CD8-positive, alpha-beta T cell (primary cell): ENCODE measurements at regions of chr17 and their contacts with region 1.

Region 1: DNA sequence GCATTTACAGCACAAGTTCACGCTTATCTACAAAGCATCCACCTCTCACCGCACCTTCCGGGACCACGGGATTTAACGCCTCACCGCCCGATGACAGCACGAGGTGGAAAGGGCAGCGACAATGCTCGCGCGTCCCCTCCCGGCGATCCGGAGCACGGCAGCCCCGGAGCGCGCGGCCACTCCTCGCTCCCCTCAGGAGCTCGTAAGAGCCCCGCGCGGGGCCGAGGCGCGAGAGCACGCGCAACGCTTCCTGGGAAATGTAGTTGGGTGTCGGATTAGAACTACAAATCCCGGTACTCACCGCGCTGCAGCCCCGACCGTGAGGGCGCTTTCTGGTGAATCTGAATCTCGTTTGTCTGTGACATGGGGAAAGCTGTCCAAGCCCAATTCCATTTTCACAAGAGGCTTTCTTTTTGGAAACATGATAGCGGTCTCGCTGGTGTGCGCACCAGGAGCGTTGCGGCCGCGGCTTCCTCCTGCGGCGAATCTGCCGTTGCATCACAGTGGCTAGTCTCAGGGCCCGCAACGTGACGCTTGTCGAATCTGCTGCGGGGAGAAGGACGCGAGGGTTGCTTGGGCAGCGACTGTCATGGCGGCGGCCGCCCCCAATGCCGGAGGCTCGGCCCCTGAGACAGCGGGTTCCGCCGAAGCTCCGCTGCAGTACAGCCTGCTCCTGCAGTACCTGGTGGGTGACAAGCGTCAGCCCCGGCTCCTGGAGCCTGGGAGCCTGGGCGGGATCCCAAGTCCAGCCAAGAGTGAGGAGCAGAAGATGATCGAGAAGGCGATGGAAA is at the start of gene TIMM22:
- DNase-seq: peak; percentile 84 to 98 (median 92)
- ATAC-seq: peak; percentile 93
- H3K4me3 ChIP-seq: peak within 1 kb of the TSS; percentile 86 to 97
- H3K4me3 Mint-ChIP-seq: peak within 1 kb of the TSS; percentile 99
- H3K27ac ChIP-seq: peak within 1 kb of the TSS; percentile 70 to 90
- H3K27ac Mint-ChIP-seq: peak within 1 kb of the TSS; percentile 97
- H3K4me1 ChIP-seq: peaks cover 9% of the 10 kb centered on the region
- H3K4me1 Mint-ChIP-seq: peaks cover 24% of the 10 kb centered on the region
- H3K27me3 ChIP-seq: no peaks in the 10 kb centered on the region
- H3K27me3 Mint-ChIP-seq: no peaks in the 10 kb centered on the region
- CTCF ChIP-seq: peak; percentile 90
- total RNA-seq, gene TIMM22: 13.2 to 14.0 TPM

Region 2: DNA sequence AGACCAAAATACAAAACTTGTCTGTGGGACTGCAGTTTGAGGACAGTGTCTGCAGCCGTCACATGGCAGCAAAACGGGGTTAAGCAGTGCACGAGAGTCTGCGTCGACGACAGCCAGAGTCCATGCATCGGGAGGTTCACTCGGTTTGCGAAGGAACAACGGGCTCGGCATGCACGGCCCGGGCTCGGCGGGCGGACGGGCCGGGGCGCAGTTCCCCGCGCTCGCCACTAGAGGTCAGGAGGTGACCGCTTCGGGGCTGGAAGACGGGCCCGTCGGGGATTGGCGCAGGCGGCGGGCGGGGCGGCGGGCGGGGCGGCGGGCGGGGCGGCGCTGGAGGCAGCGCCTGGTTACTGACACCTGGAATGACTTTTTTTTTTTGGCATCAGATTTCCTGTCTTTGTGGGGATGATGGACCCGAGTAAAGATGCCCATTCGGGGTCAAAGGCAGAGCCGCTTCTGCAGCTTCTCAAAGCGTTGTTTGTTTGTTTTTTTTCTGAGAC is 852.9 kb before region 1 on chr17:
- CTCF ChIA-PET with region 1: no interaction called
- POLR2A ChIA-PET with region 1: no interaction called
- intact Hi-C with region 1: loop called (anchors 2 to 5 kb)
- DNase-seq: peak; percentile 69 to 92 (median 83)
- ATAC-seq: peak; percentile 99
- H3K4me3 ChIP-seq: no peak overlapping the region
- H3K4me3 Mint-ChIP-seq: no peak overlapping the region
- H3K27ac ChIP-seq: no peak overlapping the region
- H3K27ac Mint-ChIP-seq: no peak overlapping the region
- H3K4me1 ChIP-seq: peaks cover 3% of the 10 kb centered on the region
- H3K4me1 Mint-ChIP-seq: peaks cover 2% of the 10 kb centered on the region
- H3K27me3 ChIP-seq: no peaks in the 10 kb centered on the region
- H3K27me3 Mint-ChIP-seq: peaks cover 6% of the 10 kb centered on the region
- CTCF ChIP-seq: peak; percentile 94

Region 3: GRCh38 chr17:633641-634101 is 363.1 kb before region 1 on chr17:
- CTCF ChIA-PET with region 1: no interaction called
- POLR2A ChIA-PET with region 1: no interaction called
- intact Hi-C with region 1: no loop called
- DNase-seq: no peak
- ATAC-seq: no peak
- H3K4me3 ChIP-seq: no peak overlapping the region
- H3K4me3 Mint-ChIP-seq: no peak overlapping the region
- H3K27ac ChIP-seq: no peak overlapping the region
- H3K27ac Mint-ChIP-seq: no peak overlapping the region
- H3K4me1 ChIP-seq: no peaks in the 10 kb centered on the region
- H3K4me1 Mint-ChIP-seq: no peaks in the 10 kb centered on the region
- H3K27me3 ChIP-seq: no peaks in the 10 kb centered on the region
- H3K27me3 Mint-ChIP-seq: no peaks in the 10 kb centered on the region
- CTCF ChIP-seq: no peak

Region 4: DNA sequence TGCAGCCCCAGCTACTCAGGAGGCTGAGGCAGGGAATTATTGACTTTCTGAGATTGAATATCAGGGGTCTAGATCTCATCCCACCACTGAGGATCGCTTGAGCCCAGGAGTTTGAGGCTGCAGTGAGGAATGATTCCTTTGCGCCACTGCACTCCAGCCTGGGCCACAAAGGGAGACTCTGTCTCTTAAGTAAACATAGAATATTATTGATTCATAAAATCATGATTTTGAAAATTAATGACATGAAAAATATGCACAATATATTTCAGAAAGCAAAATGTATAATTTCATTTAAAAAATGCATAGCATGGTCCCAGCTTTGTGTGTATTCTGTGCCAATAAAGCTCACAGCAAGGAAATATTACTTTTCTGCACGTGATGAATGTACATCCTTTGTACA is 280.5 kb before region 1 on chr17:
- CTCF ChIA-PET with region 1: interaction called, 5 read pairs
- POLR2A ChIA-PET with region 1: interaction called, 3 read pairs
- intact Hi-C with region 1: loop called (anchors 1 to 5 kb)
- DNase-seq: no peak
- ATAC-seq: no peak
- H3K4me3 ChIP-seq: no peak overlapping the region
- H3K4me3 Mint-ChIP-seq: no peak overlapping the region
- H3K27ac ChIP-seq: no peak overlapping the region
- H3K27ac Mint-ChIP-seq: no peak overlapping the region
- H3K4me1 ChIP-seq: peaks cover 18% of the 10 kb centered on the region
- H3K4me1 Mint-ChIP-seq: peaks cover 31% of the 10 kb centered on the region
- H3K27me3 ChIP-seq: no peaks in the 10 kb centered on the region
- H3K27me3 Mint-ChIP-seq: no peaks in the 10 kb centered on the region
- CTCF ChIP-seq: no peak

Region 5: GRCh38 chr17:781805-782731 is 214.7 kb before region 1 on chr17 and contains the starts of genes GLOD4 and MRM3:
- CTCF ChIA-PET with region 1: interaction called, 9 read pairs
- POLR2A ChIA-PET with region 1: interaction called, 4 read pairs
- intact Hi-C with region 1: loop called (anchors 1 kb)
- DNase-seq: peak; percentile 91 to 99 (median 95)
- ATAC-seq: peak; percentile 94
- H3K4me3 ChIP-seq: peak within 1 kb of the TSS; percentile 92 to 100
- H3K4me3 Mint-ChIP-seq: peak within 1 kb of the TSS; percentile 97
- H3K27ac ChIP-seq: peak within 1 kb of the TSS; percentile 94 to 97
- H3K27ac Mint-ChIP-seq: peak within 1 kb of the TSS; percentile 97
- H3K4me1 ChIP-seq: peaks cover 28% of the 10 kb centered on the region
- H3K4me1 Mint-ChIP-seq: peaks cover 34% of the 10 kb centered on the region
- H3K27me3 ChIP-seq: no peaks in the 10 kb centered on the region
- H3K27me3 Mint-ChIP-seq: no peaks in the 10 kb centered on the region
- CTCF ChIP-seq: no peak
- total RNA-seq, gene GLOD4: 80.7 to 86.2 TPM
- total RNA-seq, gene MRM3: 47.4 to 49.7 TPM

Region 6: GRCh38 chr17:850851-851763 is 145.6 kb before region 1 on chr17:
- CTCF ChIA-PET with region 1: no interaction called
- POLR2A ChIA-PET with region 1: no interaction called
- intact Hi-C with region 1: no loop called
- DNase-seq: no peak
- ATAC-seq: no peak
- H3K4me3 ChIP-seq: no peak overlapping the region
- H3K4me3 Mint-ChIP-seq: no peak overlapping the region
- H3K27ac ChIP-seq: no peak overlapping the region
- H3K27ac Mint-ChIP-seq: no peak overlapping the region
- H3K4me1 ChIP-seq: no peaks in the 10 kb centered on the region
- H3K4me1 Mint-ChIP-seq: peaks cover 8% of the 10 kb centered on the region
- H3K27me3 ChIP-seq: no peaks in the 10 kb centered on the region
- H3K27me3 Mint-ChIP-seq: peaks cover 21% of the 10 kb centered on the region
- CTCF ChIP-seq: no peak

Region 7: GRCh38 chr17:879549-880442 is 117.0 kb before region 1 on chr17:
- CTCF ChIA-PET with region 1: interaction called, 8 read pairs
- POLR2A ChIA-PET with region 1: interaction called, 3 read pairs
- intact Hi-C with region 1: loop called in 1 of 2 experiments (anchors 1 kb)
- DNase-seq: peak; percentile 29 to 81 (median 64)
- ATAC-seq: peak; percentile 68
- H3K4me3 ChIP-seq: no peak overlapping the region
- H3K4me3 Mint-ChIP-seq: no peak overlapping the region
- H3K27ac ChIP-seq: no peak overlapping the region
- H3K27ac Mint-ChIP-seq: no peak overlapping the region
- H3K4me1 ChIP-seq: peaks cover 6% of the 10 kb centered on the region
- H3K4me1 Mint-ChIP-seq: peaks cover 10% of the 10 kb centered on the region
- H3K27me3 ChIP-seq: peaks cover 0 to 4% of the 10 kb centered on the region in 2 experiments
- H3K27me3 Mint-ChIP-seq: peaks cover 35% of the 10 kb centered on the region
- CTCF ChIP-seq: peak; percentile 56

Region 8: DNA sequence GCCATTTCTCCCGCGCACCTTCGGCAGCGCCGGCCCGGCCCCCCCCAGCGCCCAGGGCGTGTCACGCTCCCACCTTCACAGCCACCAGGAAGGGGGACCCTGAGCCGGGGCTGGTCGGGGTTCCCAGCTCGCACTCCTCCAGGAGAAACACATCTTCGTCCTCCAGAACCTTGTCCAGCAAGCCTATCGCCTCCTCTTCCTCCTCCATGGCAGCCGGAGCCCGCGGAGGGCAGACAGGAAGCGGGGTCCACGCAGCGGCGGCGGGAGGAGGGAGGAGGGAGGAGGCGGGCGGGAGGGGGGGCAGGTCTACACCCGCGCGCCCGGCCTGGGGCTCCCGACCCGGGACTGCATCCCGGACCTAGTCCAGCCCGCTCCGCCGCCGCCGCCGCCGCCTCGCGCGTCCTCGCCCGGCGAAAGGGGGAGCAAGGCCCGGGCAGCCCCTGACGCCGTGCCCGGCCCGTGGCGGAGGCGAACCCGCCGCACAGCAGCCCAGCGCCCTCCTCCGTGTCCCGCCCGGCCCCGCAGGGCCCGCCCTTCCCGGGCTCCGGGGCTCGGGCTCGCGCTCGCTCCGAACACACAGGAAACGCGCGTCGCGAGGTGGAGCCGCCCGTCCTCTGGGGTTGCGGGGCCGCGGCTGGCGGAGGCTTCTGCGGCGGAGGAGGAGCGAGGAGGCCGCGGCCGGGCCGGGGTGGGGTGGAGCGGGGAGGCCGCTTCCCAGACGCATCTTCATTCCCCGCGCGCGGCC is 112.3 kb after region 1 on chr17:
- CTCF ChIA-PET with region 1: no interaction called
- POLR2A ChIA-PET with region 1: interaction called, 3 read pairs
- intact Hi-C with region 1: loop called in 1 of 2 experiments (anchors 2 kb)
- DNase-seq: peak; percentile 34 to 87 (median 69)
- ATAC-seq: peak; percentile 82
- H3K4me3 ChIP-seq: peak overlapping the region; percentile 68 to 70
- H3K4me3 Mint-ChIP-seq: peak overlapping the region; percentile 84
- H3K27ac ChIP-seq: peak overlapping the region; percentile 60 to 71
- H3K27ac Mint-ChIP-seq: peak overlapping the region; percentile 82
- H3K4me1 ChIP-seq: peaks cover 24% of the 10 kb centered on the region
- H3K4me1 Mint-ChIP-seq: peaks cover 26% of the 10 kb centered on the region
- H3K27me3 ChIP-seq: no peaks in the 10 kb centered on the region
- H3K27me3 Mint-ChIP-seq: no peaks in the 10 kb centered on the region
- CTCF ChIP-seq: no peak

Region 9: DNA sequence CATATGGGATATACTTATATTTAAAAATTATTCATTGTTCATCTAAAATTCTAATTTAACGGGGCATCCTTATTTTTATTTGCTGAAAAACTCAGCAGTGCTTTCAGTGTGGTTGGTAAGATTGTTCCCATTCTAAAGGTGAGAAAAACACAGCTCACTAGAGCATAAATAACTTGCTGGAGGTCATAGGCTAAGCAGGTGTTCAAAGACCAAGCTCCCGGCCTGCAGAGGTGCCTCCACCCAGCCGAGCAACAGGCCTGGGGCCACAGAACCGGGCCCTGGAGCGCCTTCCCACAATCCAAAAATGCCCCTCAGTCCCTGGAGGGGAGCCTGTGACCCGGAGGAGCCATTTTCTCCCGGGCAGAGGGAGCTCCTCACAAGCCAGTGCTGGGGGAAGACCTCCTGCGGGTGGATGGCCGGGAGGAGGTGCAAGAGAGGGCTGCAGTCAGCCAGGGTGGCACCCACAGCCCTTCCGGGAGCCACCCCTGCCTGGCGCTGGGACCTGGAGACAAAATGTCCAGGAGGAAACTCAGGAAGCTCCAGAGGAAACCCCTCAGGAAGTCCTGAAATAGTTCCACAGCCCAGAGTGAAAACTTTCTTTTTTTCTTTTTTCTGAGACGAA is 168.3 kb after region 1 on chr17:
- CTCF ChIA-PET with region 1: no interaction called
- POLR2A ChIA-PET with region 1: no interaction called
- intact Hi-C with region 1: no loop called
- DNase-seq: no peak
- ATAC-seq: no peak
- H3K4me3 ChIP-seq: no peak overlapping the region
- H3K4me3 Mint-ChIP-seq: no peak overlapping the region
- H3K27ac ChIP-seq: no peak overlapping the region
- H3K27ac Mint-ChIP-seq: no peak overlapping the region
- H3K4me1 ChIP-seq: no peaks in the 10 kb centered on the region
- H3K4me1 Mint-ChIP-seq: peaks cover 14% of the 10 kb centered on the region
- H3K27me3 ChIP-seq: no peaks in the 10 kb centered on the region
- H3K27me3 Mint-ChIP-seq: no peaks in the 10 kb centered on the region
- CTCF ChIP-seq: no peak